CD8-positive, alpha-beta T cell (primary cell): ENCODE measurements at regions of chr1 and their contacts with region 1.

Region 1: DNA sequence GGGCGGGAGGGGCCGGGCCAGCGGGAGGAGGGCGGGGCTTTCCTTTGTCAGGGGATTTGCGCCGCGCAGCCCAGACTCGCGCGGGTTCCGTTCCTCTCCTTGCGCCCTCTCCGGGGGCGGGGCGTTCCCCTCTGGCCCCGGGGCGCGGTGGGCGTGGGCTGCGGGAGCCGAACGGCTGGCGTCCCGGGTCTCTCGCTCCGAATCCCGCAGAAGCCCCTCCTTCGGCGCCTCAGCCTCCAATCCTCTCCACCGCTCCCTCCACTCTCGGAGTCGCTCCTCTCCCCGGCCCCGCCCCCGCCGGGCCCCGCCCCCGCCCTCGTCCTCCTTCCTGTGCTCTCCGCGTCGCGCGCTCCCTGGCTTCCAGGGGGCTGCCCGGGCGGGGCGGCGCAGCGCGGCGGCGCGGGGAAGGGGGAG is 82.8 kb upstream of the BMP8A start:
- DNase-seq: peak; percentile 50 to 91 (median 83)
- ATAC-seq: peak; percentile 87
- H3K4me3 ChIP-seq: peak overlapping the region; percentile 50 to 55
- H3K4me3 Mint-ChIP-seq: peak overlapping the region; percentile 88
- H3K27ac ChIP-seq: peak overlapping the region in 1 of 2 experiments; percentile 38
- H3K27ac Mint-ChIP-seq: no peak overlapping the region
- H3K4me1 ChIP-seq: peaks cover 35% of the 10 kb centered on the region
- H3K4me1 Mint-ChIP-seq: peaks cover 45% of the 10 kb centered on the region
- H3K27me3 ChIP-seq: no peaks in the 10 kb centered on the region
- H3K27me3 Mint-ChIP-seq: no peaks in the 10 kb centered on the region
- CTCF ChIP-seq: no peak

Region 2: GRCh38 chr1:37553927-37554808 is 1854.5 kb before region 1 on chr1 and contains the start of gene SNIP1:
- CTCF ChIA-PET with region 1: no interaction called
- POLR2A ChIA-PET with region 1: no interaction called
- intact Hi-C with region 1: no loop called
- DNase-seq: peak; percentile 84 to 96 (median 91)
- ATAC-seq: peak; percentile 95
- H3K4me3 ChIP-seq: peak within 1 kb of the TSS; percentile 88 to 97
- H3K4me3 Mint-ChIP-seq: peak within 1 kb of the TSS; percentile 100
- H3K27ac ChIP-seq: peak within 1 kb of the TSS; percentile 88 to 91
- H3K27ac Mint-ChIP-seq: peak within 1 kb of the TSS; percentile 100
- H3K4me1 ChIP-seq: peaks cover 24% of the 10 kb centered on the region
- H3K4me1 Mint-ChIP-seq: peaks cover 43% of the 10 kb centered on the region
- H3K27me3 ChIP-seq: no peaks in the 10 kb centered on the region
- H3K27me3 Mint-ChIP-seq: peaks cover 2% of the 10 kb centered on the region
- CTCF ChIP-seq: no peak
- total RNA-seq, gene SNIP1: 71.7 to 84.2 TPM

Region 3: GRCh38 chr1:38964140-38964548 is 444.5 kb before region 1 on chr1:
- CTCF ChIA-PET with region 1: no interaction called
- POLR2A ChIA-PET with region 1: no interaction called
- intact Hi-C with region 1: no loop called
- DNase-seq: peak in 4 of 9 experiments; percentile 11 to 48 (median 26)
- ATAC-seq: peak; percentile 52
- H3K4me3 ChIP-seq: no peak overlapping the region
- H3K4me3 Mint-ChIP-seq: no peak overlapping the region
- H3K27ac ChIP-seq: no peak overlapping the region
- H3K27ac Mint-ChIP-seq: no peak overlapping the region
- H3K4me1 ChIP-seq: peaks cover 7% of the 10 kb centered on the region
- H3K4me1 Mint-ChIP-seq: peaks cover 9% of the 10 kb centered on the region
- H3K27me3 ChIP-seq: no peaks in the 10 kb centered on the region
- H3K27me3 Mint-ChIP-seq: no peaks in the 10 kb centered on the region
- CTCF ChIP-seq: no peak

Region 4: DNA sequence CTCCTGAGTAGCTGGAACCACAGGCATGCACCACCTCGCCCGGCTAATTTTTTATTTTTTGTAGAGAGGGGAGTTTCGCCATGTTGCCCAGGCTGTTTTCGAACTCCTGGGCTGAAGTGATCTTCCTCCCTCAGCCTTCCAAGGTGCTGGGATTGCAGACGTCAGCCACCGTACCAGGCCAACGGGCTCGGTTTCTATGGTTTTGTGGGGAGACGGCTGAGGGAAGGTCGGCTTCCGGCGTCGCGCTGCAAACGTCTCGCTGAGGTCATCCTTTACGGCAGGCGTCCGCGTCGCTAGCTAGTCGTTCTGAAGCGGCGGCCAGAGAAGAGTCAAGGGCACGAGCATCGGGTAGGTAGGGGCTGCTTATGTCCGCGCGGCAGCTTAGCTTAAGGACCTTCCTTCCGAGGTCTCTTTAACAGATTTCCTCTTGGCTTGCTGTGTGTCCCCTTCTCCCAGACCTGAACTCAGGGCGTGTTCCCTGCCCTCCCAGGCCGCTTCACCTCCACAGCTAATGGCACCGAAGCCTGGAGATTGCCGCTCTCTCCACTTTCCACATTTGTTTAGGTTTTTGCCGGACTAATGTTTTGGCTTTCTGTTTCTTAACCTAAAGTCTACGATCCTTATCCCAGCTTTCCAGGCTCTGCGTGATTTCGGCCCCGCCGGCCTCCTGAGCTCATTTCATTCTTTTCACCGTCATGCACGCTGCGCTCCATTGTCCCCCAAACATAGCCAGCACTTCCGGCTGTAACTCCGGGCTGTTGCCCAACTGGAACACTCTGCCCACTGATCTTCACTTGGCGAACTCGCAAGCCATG is 382.4 kb before region 1 on chr1 and contains the start of gene NDUFS5:
- CTCF ChIA-PET with region 1: interaction called, 3 read pairs
- POLR2A ChIA-PET with region 1: no interaction called
- intact Hi-C with region 1: loop called in 1 of 2 experiments (anchors 10 kb)
- DNase-seq: peak; percentile 62 to 93 (median 83)
- ATAC-seq: peak; percentile 94
- H3K4me3 ChIP-seq: peak within 1 kb of the TSS; percentile 70 to 86
- H3K4me3 Mint-ChIP-seq: peak within 1 kb of the TSS; percentile 95
- H3K27ac ChIP-seq: peak within 1 kb of the TSS; percentile 74 to 88
- H3K27ac Mint-ChIP-seq: peak within 1 kb of the TSS; percentile 97
- H3K4me1 ChIP-seq: peaks cover 17% of the 10 kb centered on the region
- H3K4me1 Mint-ChIP-seq: peaks cover 31% of the 10 kb centered on the region
- H3K27me3 ChIP-seq: no peaks in the 10 kb centered on the region
- H3K27me3 Mint-ChIP-seq: no peaks in the 10 kb centered on the region
- CTCF ChIP-seq: no peak
- total RNA-seq, gene NDUFS5: 93.1 to 105 TPM

Region 5: GRCh38 chr1:39268112-39268581 is 140.5 kb before region 1 on chr1:
- CTCF ChIA-PET with region 1: interaction called, 8 read pairs
- POLR2A ChIA-PET with region 1: no interaction called
- intact Hi-C with region 1: loop called in 1 of 2 experiments (anchors 10 kb)
- DNase-seq: peak in 3 of 9 experiments; percentile 16 to 30 (median 21)
- ATAC-seq: peak; percentile 54
- H3K4me3 ChIP-seq: no peak overlapping the region
- H3K4me3 Mint-ChIP-seq: peak overlapping the region; percentile 61
- H3K27ac ChIP-seq: no peak overlapping the region
- H3K27ac Mint-ChIP-seq: peak overlapping the region; percentile 60
- H3K4me1 ChIP-seq: peaks cover 22% of the 10 kb centered on the region
- H3K4me1 Mint-ChIP-seq: peaks cover 82% of the 10 kb centered on the region
- H3K27me3 ChIP-seq: no peaks in the 10 kb centered on the region
- H3K27me3 Mint-ChIP-seq: no peaks in the 10 kb centered on the region
- CTCF ChIP-seq: no peak

Region 6: GRCh38 chr1:39391691-39392679 is 16.7 kb before region 1 on chr1:
- CTCF ChIA-PET with region 1: interaction called, 26 read pairs
- POLR2A ChIA-PET with region 1: interaction called, 3 read pairs
- intact Hi-C with region 1: loop called (anchors 2 kb)
- DNase-seq: no peak
- ATAC-seq: no peak
- H3K4me3 ChIP-seq: no peak overlapping the region
- H3K4me3 Mint-ChIP-seq: no peak overlapping the region
- H3K27ac ChIP-seq: no peak overlapping the region
- H3K27ac Mint-ChIP-seq: peak overlapping the region; percentile 38
- H3K4me1 ChIP-seq: peaks cover 10% of the 10 kb centered on the region
- H3K4me1 Mint-ChIP-seq: peaks cover 57% of the 10 kb centered on the region
- H3K27me3 ChIP-seq: no peaks in the 10 kb centered on the region
- H3K27me3 Mint-ChIP-seq: no peaks in the 10 kb centered on the region
- CTCF ChIP-seq: no peak

Region 7: DNA sequence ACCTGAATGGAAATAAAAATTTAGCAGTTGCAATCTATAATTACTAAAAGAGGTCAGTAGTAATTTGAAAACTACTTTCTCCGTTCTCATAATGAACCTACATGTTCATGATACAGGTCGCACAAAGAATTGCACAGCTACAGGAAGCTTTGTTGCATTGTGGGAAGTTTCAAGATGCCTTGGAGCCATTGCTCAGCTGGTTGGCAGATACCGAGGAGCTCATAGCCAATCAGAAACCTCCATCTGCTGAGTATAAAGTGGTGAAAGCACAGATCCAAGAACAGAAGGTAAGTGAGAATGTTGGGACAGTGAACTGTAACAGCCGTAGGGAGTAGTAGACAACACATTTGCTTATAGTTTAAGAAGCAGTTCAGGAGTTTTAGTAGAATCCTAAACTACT is 14.0 kb after region 1 on chr1:
- CTCF ChIA-PET with region 1: interaction called, 29 read pairs
- POLR2A ChIA-PET with region 1: interaction called, 5 read pairs
- intact Hi-C with region 1: no loop called
- DNase-seq: no peak
- ATAC-seq: no peak
- H3K4me3 ChIP-seq: no peak overlapping the region
- H3K4me3 Mint-ChIP-seq: no peak overlapping the region
- H3K27ac ChIP-seq: no peak overlapping the region
- H3K27ac Mint-ChIP-seq: peak overlapping the region; percentile 10
- H3K4me1 ChIP-seq: no peaks in the 10 kb centered on the region
- H3K4me1 Mint-ChIP-seq: peaks cover 8% of the 10 kb centered on the region
- H3K27me3 ChIP-seq: no peaks in the 10 kb centered on the region
- H3K27me3 Mint-ChIP-seq: no peaks in the 10 kb centered on the region
- CTCF ChIP-seq: no peak